Activated CD4-positive, alpha-beta memory T cell treated with anti-CD3 and anti-CD28 coated beads for 36 hours (primary cell): ENCODE measurements at regions of chr1 and their contacts with region 1.

Region 1: DNA sequence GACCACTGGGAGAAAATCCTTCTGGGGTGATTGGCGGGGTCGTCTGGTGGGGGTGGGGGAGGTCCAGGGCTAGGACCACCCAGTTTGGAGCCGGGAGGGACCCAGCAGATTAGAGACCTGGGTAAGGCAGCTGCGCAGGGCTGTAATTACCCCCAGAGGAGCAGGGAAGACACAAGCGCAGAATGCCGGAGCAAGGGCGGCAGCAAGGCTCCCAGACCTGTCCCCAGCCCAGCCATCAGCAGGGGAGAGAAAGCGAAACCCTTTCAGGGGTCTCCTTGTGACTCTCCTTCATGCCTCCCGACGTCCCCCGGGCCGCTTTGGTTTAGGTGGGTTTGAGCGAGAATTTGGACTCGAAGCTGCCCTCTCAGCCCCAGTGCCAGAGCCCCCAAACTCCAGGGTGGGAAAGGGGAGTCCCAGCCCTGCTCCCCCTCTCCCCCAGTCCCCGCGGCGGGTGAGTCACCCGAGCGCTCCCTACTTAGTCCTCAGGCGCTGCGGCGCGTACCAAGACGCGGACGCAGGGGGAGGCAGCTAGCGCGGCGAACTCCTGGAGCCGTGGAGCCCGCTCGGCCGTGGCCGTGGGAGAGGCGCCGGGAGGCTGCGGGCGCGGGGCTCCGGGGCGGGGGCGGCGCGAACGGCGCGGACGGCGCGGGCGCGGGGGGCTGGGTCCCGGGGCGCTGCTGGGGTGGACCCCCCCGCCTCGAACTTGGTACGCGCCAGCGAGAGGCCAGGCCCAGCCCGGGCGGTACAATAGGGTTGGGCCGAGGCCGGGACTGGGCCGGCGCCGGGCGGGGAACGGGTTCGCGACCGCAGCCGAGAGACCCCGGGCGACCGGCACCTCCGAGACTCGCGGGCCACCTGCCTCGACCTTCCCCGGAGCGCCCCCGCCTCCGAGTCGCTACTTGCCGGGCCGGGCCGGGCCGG is at the start of gene MAP7D1:
- DNase-seq: peak; percentile 88
- H3K4me3 Mint-ChIP-seq: peak within 1 kb of the TSS; percentile 86
- H3K27ac Mint-ChIP-seq: peak within 1 kb of the TSS; percentile 92
- H3K4me1 Mint-ChIP-seq: peaks cover 68% of the 10 kb centered on the region
- H3K27me3 Mint-ChIP-seq: no peaks in the 10 kb centered on the region
- total RNA-seq, gene MAP7D1: 138 to 143 TPM

Region 2: DNA sequence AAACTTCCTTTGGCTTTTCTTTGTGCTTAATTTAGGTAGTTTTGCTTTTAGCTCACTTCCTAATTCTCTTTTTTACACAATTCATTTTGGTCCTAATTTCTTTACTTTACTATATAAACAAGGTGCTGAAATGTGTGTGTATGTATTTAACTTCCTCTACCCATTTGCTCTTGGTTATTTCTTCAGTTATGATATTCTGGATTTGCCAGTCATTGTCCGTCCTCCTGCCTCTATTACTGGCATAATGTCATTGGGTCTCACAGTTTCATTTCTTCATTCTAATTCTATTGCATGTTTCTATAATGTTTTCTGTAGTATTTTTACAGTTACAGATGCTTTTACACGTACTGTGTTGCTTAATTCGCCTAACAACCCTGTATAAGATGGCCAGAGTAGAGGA is 790.9 kb before region 1 on chr1:
- CTCF ChIA-PET with region 1: no interaction called
- POLR2A ChIA-PET with region 1: no interaction called
- intact Hi-C with region 1: no loop called
- DNase-seq: no peak
- H3K4me3 Mint-ChIP-seq: no peak overlapping the region
- H3K27ac Mint-ChIP-seq: no peak overlapping the region
- H3K4me1 Mint-ChIP-seq: peaks cover 7% of the 10 kb centered on the region
- H3K27me3 Mint-ChIP-seq: no peaks in the 10 kb centered on the region

Region 3: DNA sequence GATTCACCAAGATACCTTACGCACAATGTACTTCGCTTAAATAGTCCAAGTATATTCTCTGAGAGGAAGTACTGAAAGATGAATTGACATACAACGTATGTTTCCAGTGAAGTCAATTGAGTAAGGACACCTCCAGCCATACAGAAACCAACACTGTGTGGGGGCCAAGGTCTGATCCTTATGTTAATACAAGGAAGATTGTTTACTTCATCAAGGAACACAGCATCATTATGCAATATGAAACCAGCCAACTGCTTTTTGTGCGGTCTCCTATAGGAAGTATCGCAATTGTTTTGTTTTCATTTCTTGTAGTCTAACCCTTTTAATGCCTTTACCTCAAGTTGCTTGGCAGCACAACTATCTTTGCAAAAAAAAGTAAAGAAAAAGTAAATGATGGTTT is 100.0 kb before region 1 on chr1:
- CTCF ChIA-PET with region 1: no interaction called
- POLR2A ChIA-PET with region 1: no interaction called
- intact Hi-C with region 1: no loop called
- DNase-seq: no peak
- H3K4me3 Mint-ChIP-seq: no peak overlapping the region
- H3K27ac Mint-ChIP-seq: no peak overlapping the region
- H3K4me1 Mint-ChIP-seq: no peaks in the 10 kb centered on the region
- H3K27me3 Mint-ChIP-seq: no peaks in the 10 kb centered on the region

Region 4: DNA sequence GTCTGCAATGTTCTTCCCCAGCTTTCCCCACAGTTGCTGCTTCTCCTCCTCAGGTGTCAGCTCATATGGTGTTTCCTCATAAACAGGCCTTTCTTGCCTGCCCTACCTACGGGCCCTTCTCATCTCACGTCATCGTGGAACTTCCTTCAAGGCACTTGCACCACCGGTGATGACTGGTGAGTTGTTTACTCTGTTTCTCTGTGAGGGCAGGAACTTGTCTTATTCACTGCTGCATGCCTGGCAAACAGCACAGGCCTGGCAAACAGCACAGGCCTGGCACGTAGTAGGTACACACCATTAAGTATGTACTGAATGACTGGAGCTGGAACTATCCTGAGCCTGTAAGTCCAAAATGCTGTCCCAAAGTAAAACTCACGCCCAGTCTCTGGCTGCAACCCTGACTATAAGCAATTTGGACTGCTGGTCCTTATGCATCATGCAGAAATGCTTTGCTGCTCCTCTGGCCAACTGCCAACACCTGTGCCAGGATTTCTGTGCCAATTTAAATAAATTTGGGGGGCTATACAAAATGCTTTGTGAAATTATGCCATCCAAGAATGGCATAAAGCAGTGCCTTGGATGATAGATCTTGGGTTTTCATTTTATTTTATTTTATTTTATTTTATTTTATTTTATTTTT is 204.4 kb after region 1 on chr1:
- CTCF ChIA-PET with region 1: no interaction called
- POLR2A ChIA-PET with region 1: no interaction called
- intact Hi-C with region 1: no loop called
- DNase-seq: peak; percentile 57
- H3K4me3 Mint-ChIP-seq: no peak overlapping the region
- H3K27ac Mint-ChIP-seq: peak overlapping the region; percentile 84
- H3K4me1 Mint-ChIP-seq: peaks cover 21% of the 10 kb centered on the region
- H3K27me3 Mint-ChIP-seq: no peaks in the 10 kb centered on the region

Region 5: GRCh38 chr1:36458654-36459309 is 303.1 kb after region 1 on chr1:
- CTCF ChIA-PET with region 1: no interaction called
- POLR2A ChIA-PET with region 1: no interaction called
- intact Hi-C with region 1: loop called (anchors 5 kb)
- DNase-seq: peak; percentile 85
- H3K4me3 Mint-ChIP-seq: no peak overlapping the region
- H3K27ac Mint-ChIP-seq: peak overlapping the region; percentile 77
- H3K4me1 Mint-ChIP-seq: peaks cover 44% of the 10 kb centered on the region
- H3K27me3 Mint-ChIP-seq: no peaks in the 10 kb centered on the region